Activated T-helper 2 cell treated with anti-CD3 and anti-CD28 coated beads, Interferon-gamma antibody, Interleukin-2, Interleukin-4, amounts not matched to agents 10 μg/mL and 5 μg/mL and 100 μg/mL, durations not matched to agents 14 hours and 24 hours and 36 hours (primary cell): ENCODE measurements at regions of chr21 and their contacts with region 1.

Region 1: GRCh38 chr21:35226948-35227744 is 178.0 kb upstream of the RUNX1 start:
- DNase-seq: peak; percentile 52
- H3K4me3 Mint-ChIP-seq: peak overlapping the region; percentile 37
- H3K27ac Mint-ChIP-seq: peak overlapping the region; percentile 72
- H3K4me1 Mint-ChIP-seq: peaks cover 52% of the 10 kb centered on the region
- H3K27me3 Mint-ChIP-seq: no peaks in the 10 kb centered on the region

Region 2: DNA sequence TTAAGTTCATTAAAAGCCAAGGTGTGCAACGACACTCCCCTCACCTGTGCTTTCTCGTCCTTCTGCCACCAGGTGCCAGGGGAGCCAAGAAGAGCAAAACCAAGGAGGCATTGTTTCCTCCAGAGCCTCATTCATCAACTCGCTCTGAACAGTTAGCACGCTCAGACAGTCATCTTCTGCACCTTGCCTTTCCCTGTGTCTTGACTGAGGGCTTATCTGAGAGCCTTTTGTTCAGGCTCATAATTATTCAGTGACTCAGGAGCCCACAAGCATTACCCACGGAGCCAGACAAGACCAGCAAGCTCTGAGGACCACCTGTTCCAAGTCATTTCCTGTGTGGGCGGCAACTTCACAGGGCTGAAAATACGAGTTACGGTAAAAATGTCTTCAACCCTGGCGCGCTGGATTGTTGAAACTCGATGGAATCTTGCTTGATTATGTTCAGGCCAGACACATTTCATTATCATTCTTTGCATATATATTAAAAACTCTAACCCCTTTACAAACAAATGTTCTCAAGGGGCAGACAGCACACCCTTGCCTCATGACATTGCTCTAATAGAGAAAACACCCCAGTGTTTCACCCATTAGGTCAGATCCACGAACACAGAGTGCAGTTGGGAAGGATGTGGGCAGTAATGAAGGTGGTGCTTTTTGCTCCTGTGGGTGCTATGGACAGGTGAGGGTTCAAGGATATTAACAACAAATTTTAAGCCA is 88.3 kb before region 1 on chr21:
- intact Hi-C with region 1: loop called (anchors 2 kb)
- DNase-seq: peak; percentile 10
- H3K4me3 Mint-ChIP-seq: peak overlapping the region; percentile 62
- H3K27ac Mint-ChIP-seq: peak overlapping the region; percentile 94
- H3K4me1 Mint-ChIP-seq: peaks cover 33% of the 10 kb centered on the region
- H3K27me3 Mint-ChIP-seq: no peaks in the 10 kb centered on the region

Region 3: GRCh38 chr21:35150562-35151226 is 76.5 kb before region 1 on chr21:
- intact Hi-C with region 1: loop called (anchors 5 kb)
- DNase-seq: no peak
- H3K4me3 Mint-ChIP-seq: no peak overlapping the region
- H3K27ac Mint-ChIP-seq: peak overlapping the region; percentile 88
- H3K4me1 Mint-ChIP-seq: peaks cover 52% of the 10 kb centered on the region
- H3K27me3 Mint-ChIP-seq: no peaks in the 10 kb centered on the region

Region 4: DNA sequence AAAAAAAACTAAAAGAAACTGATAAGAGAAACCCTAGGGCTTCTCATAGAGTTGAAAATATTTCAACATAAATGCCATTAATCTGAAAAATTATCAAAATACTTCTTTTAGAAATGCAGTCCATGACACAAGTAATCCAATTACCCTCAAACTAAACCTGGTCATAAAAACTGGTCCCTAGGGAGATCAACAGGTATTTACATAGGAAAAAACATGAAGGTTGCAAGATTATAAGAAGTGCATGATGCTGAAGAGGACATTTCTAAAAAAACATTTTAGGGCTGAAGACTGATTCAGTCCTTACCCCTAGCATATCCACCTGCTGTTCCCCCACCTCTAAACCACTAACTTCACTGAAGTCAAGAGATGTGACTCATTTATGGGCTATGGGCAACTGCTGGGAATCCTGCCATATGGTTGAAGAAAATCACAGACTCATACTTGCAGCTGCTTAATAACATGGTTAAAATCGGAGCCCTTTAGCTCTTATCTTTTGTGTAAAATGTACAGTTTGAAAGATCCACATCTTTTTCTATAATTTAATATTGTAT is 47.1 kb before region 1 on chr21:
- intact Hi-C with region 1: loop called (anchors 2 kb)
- DNase-seq: no peak
- H3K4me3 Mint-ChIP-seq: no peak overlapping the region
- H3K27ac Mint-ChIP-seq: no peak overlapping the region
- H3K4me1 Mint-ChIP-seq: peaks cover 16% of the 10 kb centered on the region
- H3K27me3 Mint-ChIP-seq: no peaks in the 10 kb centered on the region

Region 5: DNA sequence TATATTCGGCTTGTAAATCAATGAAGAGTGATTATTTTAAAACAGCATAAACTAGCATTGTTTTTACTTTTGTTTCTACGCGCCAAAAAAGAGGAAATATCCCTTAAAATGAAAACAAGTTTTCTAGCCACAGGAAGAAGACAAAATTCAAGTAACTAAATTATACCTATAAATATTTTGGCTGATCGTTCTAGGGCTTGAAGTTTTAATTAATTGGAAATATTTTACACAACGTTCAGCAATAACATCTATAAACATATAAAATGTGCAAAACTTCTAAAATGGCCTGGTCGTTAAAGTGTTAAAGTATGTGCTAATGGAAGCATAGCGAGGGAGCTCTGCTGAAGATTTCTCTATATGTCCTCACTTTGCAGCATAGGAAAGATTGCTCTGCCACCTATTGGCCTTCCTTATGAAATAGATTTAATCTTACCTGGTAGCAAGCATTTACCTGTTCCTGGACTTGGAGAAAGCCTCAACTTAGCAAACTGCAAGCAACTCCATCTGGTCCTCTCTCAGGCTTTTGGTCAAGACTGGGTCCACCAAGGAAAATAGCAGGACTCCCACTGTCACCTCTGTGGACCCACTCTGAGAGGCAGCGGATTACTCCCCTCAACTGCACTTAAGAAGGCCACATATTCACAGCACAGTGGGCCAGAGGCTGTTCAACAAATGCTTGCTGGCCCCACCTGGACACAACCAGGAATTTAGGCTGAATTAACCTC is 173.2 kb after region 1 on chr21:
- intact Hi-C with region 1: loop called (anchors 1 kb)
- DNase-seq: peak; percentile 20
- H3K4me3 Mint-ChIP-seq: peak overlapping the region; percentile 15
- H3K27ac Mint-ChIP-seq: peak overlapping the region; percentile 48
- H3K4me1 Mint-ChIP-seq: peaks cover 26% of the 10 kb centered on the region
- H3K27me3 Mint-ChIP-seq: no peaks in the 10 kb centered on the region

Region 6: DNA sequence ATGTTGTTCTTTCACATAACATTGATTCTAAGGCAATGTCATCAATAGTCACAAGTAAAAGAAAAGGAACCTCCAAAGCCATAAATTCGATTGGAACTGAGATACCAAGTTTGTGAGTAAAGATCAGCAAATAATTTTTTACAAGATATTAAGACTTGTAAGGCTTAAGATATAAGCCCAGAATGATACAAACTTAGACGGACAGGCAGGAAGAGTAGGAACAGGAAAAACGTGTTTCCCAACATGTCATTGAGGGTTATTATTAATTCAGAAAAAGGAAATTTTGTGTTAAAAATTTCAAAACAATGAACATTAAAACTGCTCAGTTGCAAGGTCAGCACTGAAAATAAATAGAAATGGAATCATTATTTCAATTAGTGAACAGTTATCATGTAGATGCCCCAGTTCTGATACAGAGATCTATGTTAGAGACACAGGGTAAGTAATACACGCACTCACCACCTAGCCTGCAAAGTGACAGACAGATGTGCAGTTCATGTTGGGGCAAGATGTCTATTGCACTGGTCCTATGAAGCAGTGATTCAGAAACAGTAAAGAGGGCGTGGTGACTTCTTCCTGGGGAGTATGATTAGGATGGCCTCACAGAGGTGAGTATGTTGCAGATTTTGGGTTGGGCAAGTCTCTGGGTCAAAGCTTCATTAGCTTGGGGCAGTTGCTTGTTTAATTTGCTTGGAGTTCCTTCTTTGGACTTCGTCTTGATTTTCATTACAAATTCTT is 548.8 kb after region 1 on chr21:
- intact Hi-C with region 1: no loop called
- DNase-seq: no peak
- H3K4me3 Mint-ChIP-seq: no peak overlapping the region
- H3K27ac Mint-ChIP-seq: no peak overlapping the region
- H3K4me1 Mint-ChIP-seq: no peaks in the 10 kb centered on the region
- H3K27me3 Mint-ChIP-seq: peaks cover 34% of the 10 kb centered on the region